ENCODE measurements at regions of chr21 and their contacts with region 1.

Region 1: GRCh38 chr21:33374450-33375096 is 28.6 kb upstream of the IFNGR2 start:
- DNase-seq: peak; percentile 52
- H3K4me3 ChIP-seq: no peak overlapping the region
- H3K27ac ChIP-seq: peak overlapping the region; percentile 50
- H3K4me1 ChIP-seq: peaks cover 9% of the 10 kb centered on the region
- H3K27me3 ChIP-seq: no peaks in the 10 kb centered on the region
- CTCF ChIP-seq: peak; percentile 77

Region 2: GRCh38 chr21:32834916-32835235 is 539.7 kb before region 1 on chr21:
- intact Hi-C with region 1: loop called (anchors 10 kb)
- DNase-seq: no peak
- H3K4me3 ChIP-seq: no peak overlapping the region
- H3K27ac ChIP-seq: no peak overlapping the region
- H3K4me1 ChIP-seq: no peaks in the 10 kb centered on the region
- H3K27me3 ChIP-seq: peaks cover 3% of the 10 kb centered on the region
- CTCF ChIP-seq: no peak

Region 3: DNA sequence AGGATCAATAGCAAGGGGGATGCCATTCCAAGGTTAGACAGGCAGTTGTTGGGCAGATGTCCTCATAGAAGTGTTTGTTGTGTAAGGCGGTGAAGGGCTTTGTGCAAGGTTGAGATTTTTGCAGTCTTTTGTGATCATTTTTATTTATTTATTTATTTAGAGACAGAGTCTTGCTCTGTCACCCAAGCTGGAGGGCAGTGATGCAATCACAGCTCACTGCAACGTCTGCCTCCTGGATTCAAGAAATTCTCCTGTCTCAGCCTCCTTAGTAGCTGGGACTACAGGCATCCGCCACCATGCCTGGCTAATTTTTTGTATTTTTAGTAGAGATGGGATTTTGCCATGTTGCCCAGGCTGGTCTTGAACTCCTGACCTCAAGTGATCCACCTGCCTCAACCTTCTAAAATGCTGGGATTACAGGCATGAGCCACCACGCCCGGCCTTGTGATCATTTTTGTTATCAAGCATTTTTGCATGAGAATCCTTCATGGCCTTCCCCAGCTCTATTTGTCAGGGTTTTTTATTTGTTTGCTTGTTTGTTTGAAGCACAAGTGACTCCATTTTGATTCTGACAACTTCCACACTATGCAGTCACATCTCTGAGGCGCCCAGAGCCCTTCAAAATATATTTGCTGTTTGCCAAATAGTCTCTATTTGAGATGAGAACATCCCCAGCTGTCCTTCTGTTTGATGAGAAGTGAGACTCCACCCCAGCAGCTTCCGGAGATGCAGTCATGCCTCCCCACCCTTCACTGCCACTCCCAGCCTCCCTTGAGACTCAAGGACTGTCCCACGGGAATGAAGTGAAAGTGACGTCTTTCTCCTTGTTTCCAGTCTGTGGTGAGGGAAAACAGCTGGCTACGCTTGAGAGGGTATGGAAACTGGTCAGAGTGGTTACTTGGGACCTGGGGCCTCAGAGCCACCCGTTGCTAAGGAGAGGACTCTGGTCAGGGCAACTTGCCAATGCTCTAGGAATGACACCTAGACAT is 67.2 kb after region 1 on chr21:
- intact Hi-C with region 1: loop called (anchors 10 kb)
- DNase-seq: peak; percentile 47
- H3K4me3 ChIP-seq: no peak overlapping the region
- H3K27ac ChIP-seq: peak overlapping the region; percentile 70
- H3K4me1 ChIP-seq: peaks cover 36% of the 10 kb centered on the region
- H3K27me3 ChIP-seq: no peaks in the 10 kb centered on the region
- CTCF ChIP-seq: no peak

Measured in left ventricle myocardium inferior (tissue), 1 donor.